ENCODE measurements at regions of chr22 and their contacts with region 1.

Region 1: DNA sequence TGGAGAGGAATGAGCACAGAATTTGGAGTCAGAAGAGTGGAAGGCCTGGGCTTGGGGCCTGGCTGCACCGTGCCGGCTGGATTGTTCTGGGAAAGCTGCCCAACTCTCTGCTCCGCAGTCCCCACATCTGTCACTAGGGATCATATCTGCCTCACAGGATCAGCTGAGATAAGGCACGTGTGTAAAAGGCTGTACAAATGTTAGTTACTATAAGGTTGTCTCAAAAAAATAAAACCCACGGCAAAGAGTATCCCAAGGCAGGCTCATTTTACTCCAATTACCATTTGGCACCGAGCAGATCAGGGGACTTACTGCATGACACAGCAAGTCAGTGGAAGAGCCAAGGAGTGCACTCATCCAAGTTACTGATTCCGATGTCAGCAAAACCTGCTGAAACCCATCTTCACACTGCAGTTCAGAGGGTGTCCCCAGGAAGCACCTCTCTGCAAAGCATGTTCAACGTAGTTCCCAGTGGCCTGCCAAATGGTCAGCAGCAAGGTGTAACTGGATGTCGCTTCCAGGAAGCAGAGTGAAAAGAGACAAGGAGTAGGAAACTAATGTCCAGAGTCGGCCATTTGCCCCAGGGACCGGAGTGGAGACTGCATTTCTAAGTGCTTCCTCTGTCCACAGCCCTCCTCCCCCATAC is 18.1 kb upstream of the MRTFA start:
- DNase-seq: peak; percentile 82
- H3K4me3 ChIP-seq: no peak overlapping the region
- H3K27ac ChIP-seq: peak overlapping the region; percentile 51
- H3K4me1 ChIP-seq: peaks cover 27% of the 10 kb centered on the region
- H3K27me3 ChIP-seq: no peaks in the 10 kb centered on the region
- CTCF ChIP-seq: peak; percentile 50

Region 2: DNA sequence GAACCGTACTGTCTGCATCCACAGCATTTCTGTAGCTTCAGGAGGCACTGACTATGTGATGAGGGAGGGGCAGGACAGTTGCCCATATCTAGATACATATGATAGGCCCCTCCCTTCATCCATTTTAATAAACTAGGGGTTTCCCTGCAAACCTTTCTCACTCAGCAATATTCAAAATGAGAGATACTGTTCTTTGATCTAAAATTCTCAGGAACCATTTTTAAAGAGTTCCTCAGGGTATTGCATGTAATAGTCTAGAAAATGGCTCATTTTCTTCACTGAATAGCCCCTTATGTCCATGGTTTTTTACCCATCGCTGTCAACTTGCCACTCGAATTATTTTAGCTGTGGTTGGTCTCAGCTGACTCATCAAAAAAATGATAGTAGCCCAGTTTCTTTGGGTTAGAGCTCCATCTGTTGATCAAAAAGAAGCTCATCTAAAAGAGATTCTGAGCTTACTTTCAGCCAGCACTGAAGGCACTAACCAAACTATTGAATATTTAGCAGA is 244.3 kb after region 1 on chr22:
- CTCF ChIA-PET with region 1: interaction called, 4 read pairs
- POLR2A ChIA-PET with region 1: no interaction called
- intact Hi-C with region 1: loop called (anchors 1 kb)
- DNase-seq: peak; percentile 84
- H3K4me3 ChIP-seq: no peak overlapping the region
- H3K27ac ChIP-seq: no peak overlapping the region
- H3K4me1 ChIP-seq: peaks cover 5% of the 10 kb centered on the region
- H3K27me3 ChIP-seq: no peaks in the 10 kb centered on the region
- CTCF ChIP-seq: peak; percentile 72

Measured in A673 (cell line).